ENCODE measurements at regions of chr5 and their contacts with region 1.

Region 1: DNA sequence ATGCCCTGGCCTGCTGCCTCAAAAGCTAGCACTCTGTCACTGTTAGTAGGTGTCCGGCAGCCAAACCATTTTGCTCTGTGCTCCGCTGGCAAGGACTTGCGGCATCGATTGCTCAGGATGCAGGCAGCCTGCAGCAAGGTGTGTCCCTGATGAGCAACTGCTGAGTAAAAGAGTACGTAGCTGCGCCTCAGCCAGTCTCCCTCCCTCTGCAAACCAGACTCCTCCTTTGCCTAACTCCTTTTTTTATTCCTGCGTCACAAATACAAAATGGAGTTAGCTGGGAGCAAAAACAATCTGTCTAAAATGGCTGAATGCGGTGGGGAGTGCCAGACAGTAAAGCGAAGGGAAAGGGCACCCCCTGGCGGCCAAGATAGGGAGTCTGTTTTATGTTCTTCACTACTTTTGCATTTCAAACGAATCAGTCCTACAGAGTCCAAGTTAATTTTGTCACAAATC is 61.1 kb downstream of the DIAPH1 start:
- DNase-seq: peak; percentile 86 to 93 (median 88)
- ATAC-seq: peak; percentile 81 to 87 (median 85)
- H3K4me3 ChIP-seq: peak overlapping the region in 10 of 12 donors; percentile 10 to 47 (median 36)
- H3K27ac ChIP-seq: peak overlapping the region; percentile 70 to 94 (median 88)
- H3K4me1 ChIP-seq: peaks cover 3 to 44% (median 32%) of the 10 kb centered on the region in 12 donors
- H3K27me3 ChIP-seq: no peaks in the 10 kb centered on the region
- CTCF ChIP-seq: peak; percentile 83 to 92 (median 88)
- POLR2A ChIP-seq: peak in 1 of 2 donors; percentile 39

Region 2: GRCh38 chr5:141199359-141200235 is 358.1 kb before region 1 on chr5 and contains the start of gene PCDHB11:
- intact Hi-C with region 1: no loop called
- DNase-seq: no peak
- ATAC-seq: no peak
- H3K4me3 ChIP-seq: peak within 1 kb of the TSS in 8 of 12 donors; percentile 2 to 33 (median 12)
- H3K27ac ChIP-seq: no peak within 1 kb of the TSS
- H3K4me1 ChIP-seq: no peaks in the 10 kb centered on the region
- H3K27me3 ChIP-seq: peaks cover 0 to 6% (median 0%) of the 10 kb centered on the region in 9 donors
- CTCF ChIP-seq: peak in 5 of 12 donors; percentile 13 to 25 (median 18)
- POLR2A ChIP-seq: no peak
- total RNA-seq, gene PCDHB11: 0.61 to 2.8 (median 1.4) TPM

Region 3: DNA sequence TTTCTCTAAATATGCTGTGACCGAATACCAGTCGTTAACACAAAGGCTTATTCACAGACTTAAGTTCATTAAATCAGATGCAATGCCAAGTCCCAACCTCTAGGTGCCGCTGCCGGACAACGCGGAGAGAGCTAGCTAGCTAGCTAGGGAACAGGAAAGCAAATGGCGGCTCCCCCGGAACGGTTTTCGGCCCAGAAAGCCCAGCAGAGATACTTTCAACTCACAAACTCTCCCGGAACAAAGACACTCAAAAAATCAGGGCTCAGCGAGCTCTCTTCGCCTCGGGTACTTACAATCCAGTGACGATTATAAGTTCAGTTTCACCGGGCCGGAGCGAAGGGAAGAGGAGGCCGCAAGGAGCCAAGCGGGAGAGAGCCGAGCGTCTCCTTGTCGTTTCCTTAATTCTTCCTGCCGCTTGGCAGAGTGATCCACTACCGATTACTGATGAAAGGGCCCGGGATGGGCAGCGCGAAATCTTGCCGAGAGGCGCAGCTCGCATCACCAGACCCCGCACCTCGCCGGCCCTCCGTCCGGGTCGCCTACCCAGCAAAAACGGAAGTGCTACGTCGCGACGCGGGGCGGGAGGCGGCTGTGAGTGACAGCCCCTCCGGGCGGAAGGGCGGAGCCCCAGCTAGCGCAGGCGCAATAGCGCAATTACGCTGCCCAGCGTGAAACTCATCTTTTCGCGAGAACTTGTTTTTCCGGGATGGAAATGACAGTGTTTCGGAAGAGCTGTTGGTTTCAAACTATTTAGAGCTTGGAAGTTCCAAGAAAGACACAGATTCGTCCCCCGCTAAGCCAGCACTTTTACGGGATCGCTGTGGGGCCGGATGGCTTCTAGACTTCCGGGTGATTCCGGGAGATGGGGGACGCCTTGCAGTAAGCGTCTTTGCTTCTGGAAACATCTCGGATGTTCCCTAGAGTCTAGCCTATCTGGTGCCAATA is 237.2 kb before region 1 on chr5 and contains the start of gene TAF7:
- intact Hi-C with region 1: loop called in 8 of 10 experiments (anchors 2 to 10 kb)
- DNase-seq: peak; percentile 89 to 96 (median 93)
- ATAC-seq: peak; percentile 99 to 100 (median 100)
- H3K4me3 ChIP-seq: peak within 1 kb of the TSS; percentile 32 to 88 (median 74)
- H3K27ac ChIP-seq: peak within 1 kb of the TSS; percentile 85 to 97 (median 92)
- H3K4me1 ChIP-seq: peaks cover 0 to 18% (median 8%) of the 10 kb centered on the region in 12 donors
- H3K27me3 ChIP-seq: no peaks in the 10 kb centered on the region
- CTCF ChIP-seq: peak; percentile 70 to 91 (median 86)
- POLR2A ChIP-seq: peak; percentile 91 to 94
- total RNA-seq, gene TAF7: 73.9 to 107 (median 99.9) TPM

Region 4: GRCh38 chr5:141412854-141413539 is 144.7 kb before region 1 on chr5 and contains the start of gene PCDHGA10:
- intact Hi-C with region 1: loop called in 9 of 10 experiments (anchors 1 to 5 kb)
- DNase-seq: peak in 3 of 5 donors; percentile 53 to 61 (median 59)
- ATAC-seq: peak; percentile 24 to 66 (median 64)
- H3K4me3 ChIP-seq: peak within 1 kb of the TSS in 10 of 12 donors; percentile 10 to 49 (median 36)
- H3K27ac ChIP-seq: peak within 1 kb of the TSS in 1 of 12 donors; percentile 36
- H3K4me1 ChIP-seq: peaks cover 0 to 4% (median 0%) of the 10 kb centered on the region in 12 donors
- H3K27me3 ChIP-seq: peaks cover 0 to 78% (median 0%) of the 10 kb centered on the region in 9 donors
- CTCF ChIP-seq: peak; percentile 26 to 60 (median 42)
- POLR2A ChIP-seq: no peak
- total RNA-seq, gene PCDHGA10: 3.3 to 11.3 (median 6.1) TPM

Region 5: DNA sequence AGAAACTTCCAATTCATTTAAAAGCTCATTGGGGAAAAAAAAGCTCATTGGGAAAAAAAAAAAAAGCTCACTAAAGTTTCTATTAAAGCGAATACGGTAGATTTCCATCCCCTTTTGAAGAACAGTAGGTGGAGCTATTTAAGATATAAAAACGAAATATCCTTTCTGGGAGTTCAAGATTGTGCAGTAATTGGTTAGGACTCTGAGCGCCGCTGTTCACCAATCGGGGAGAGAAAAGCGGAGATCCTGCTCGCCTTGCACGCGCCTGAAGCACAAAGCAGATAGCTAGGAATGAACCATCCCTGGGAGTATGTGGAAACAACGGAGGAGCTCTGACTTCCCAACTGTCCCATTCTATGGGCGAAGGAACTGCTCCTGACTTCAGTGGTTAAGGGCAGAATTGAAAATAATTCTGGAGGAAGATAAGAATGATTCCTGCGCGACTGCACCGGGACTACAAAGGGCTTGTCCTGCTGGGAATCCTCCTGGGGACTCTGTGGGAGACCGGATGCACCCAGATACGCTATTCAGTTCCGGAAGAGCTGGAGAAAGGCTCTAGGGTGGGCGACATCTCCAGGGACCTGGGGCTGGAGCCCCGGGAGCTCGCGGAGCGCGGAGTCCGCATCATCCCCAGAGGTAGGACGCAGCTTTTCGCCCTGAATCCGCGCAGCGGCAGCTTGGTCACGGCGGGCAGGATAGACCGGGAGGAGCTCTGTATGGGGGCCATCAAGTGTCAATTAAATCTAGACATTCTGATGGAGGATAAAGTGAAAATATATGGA is 127.2 kb before region 1 on chr5 and contains the start of gene PCDHGA12:
- intact Hi-C with region 1: loop called in 4 of 10 experiments (anchors 5 to 10 kb)
- DNase-seq: peak in 4 of 5 donors; percentile 56 to 77 (median 65)
- ATAC-seq: peak; percentile 67 to 94 (median 86)
- H3K4me3 ChIP-seq: peak within 1 kb of the TSS in 11 of 12 donors; percentile 19 to 58 (median 42)
- H3K27ac ChIP-seq: peak within 1 kb of the TSS in 8 of 12 donors; percentile 10 to 67 (median 40)
- H3K4me1 ChIP-seq: peaks cover 0 to 16% (median 0%) of the 10 kb centered on the region in 12 donors
- H3K27me3 ChIP-seq: peaks cover 0 to 52% (median 0%) of the 10 kb centered on the region in 9 donors
- CTCF ChIP-seq: peak; percentile 34 to 73 (median 55)
- POLR2A ChIP-seq: no peak
- total RNA-seq, gene PCDHGA12: 3.2 to 15.5 (median 7.3) TPM

Measured in heart left ventricle (tissue), 16 donors.